Activated CD8-positive, alpha-beta T cell treated with anti-CD3 and anti-CD28 coated beads, Interleukin-2, amount 10 ng/mL, durations not matched to agents 7 days and 5 days (primary cell): ENCODE measurements at regions of chr11 and their contacts with region 1.

Region 1: DNA sequence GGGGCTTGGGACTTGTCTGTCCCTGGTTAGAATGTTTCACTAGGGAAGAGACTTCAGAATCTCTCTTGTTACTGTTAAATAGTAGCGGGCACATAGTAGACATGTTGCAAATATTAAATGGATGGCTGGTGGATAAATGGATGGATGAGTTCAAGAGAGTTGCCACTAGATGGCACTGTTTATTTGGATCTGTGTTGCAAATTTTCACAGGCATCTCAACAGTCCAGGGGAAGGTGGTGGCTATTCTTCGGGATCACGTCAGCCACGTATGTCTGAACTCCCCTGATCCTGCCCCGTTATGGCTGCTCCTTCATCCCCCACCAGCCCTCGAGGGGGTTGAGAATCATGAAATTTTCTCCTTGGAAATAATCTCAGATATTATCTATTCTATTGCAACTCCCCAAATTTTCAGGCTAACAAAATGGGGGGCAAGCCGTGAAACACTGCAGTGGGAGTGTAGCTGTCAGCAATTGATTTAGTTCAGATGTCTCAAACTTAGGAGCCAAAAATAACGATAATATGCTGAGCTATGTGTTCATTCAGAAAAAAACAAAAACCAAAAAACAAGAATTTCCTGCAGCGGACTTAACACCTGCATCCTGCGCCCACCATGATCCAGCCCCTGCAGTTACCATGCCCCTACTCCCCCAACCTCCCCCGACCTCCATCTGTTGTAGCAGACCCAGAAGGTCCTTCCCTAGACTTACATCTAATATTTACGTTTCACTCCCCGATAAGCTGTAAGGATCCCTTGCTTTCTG is 29.1 kb upstream of the BIRC3 start:
- DNase-seq: peak; percentile 58
- ATAC-seq: peak; percentile 92
- H3K4me3 Mint-ChIP-seq: peak overlapping the region; percentile 31
- H3K27ac Mint-ChIP-seq: no peak overlapping the region
- H3K4me1 Mint-ChIP-seq: peaks cover 22% of the 10 kb centered on the region
- H3K27me3 Mint-ChIP-seq: no peaks in the 10 kb centered on the region

Region 2: GRCh38 chr11:102204174-102204573 is 84.0 kb before region 1 on chr11:
- CTCF ChIA-PET with region 1: no interaction called
- POLR2A ChIA-PET with region 1: no interaction called
- DNase-seq: no peak
- ATAC-seq: no peak
- H3K4me3 Mint-ChIP-seq: no peak overlapping the region
- H3K27ac Mint-ChIP-seq: no peak overlapping the region
- H3K4me1 Mint-ChIP-seq: no peaks in the 10 kb centered on the region
- H3K27me3 Mint-ChIP-seq: peaks cover 2% of the 10 kb centered on the region

Region 3: DNA sequence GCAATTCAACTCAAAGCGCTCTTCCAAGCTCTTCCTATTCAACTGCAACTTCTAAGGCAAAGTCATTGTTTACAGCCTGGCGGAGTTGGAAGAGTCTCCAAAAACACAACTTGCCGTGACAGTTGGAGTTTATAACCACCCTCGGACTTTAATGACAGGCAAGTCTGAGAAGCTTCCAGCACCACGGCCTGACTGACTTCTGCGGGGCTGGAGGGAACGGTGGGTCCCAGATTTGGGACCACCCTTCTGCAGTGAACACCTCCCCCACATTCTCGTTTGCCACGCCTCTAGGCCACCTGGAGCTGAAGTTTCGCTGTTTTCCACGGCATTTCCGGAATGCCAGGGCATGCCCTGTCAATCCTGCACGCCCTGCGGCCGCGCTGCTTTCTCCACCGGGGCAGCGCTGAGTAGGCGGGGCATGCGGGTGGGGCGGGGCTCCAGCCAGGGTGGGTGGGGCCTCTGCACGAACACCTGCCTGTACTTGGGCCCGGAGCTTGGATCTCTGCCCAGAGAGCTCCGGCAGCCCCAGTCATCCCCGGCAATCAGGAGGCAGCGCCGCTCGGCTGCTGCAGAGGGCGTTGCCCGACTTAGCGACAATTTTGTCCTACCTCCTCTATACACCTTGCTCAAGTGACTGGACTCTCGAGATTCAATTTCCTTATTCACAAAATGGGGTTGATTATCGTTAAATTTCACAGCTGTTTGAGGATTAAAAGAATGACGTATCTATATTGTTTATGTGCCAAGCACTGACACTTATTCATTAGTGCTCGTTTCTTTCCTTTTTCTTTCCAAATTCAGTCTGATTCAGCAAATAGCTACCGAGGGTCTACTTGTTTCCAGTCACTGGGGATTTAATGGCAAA is 19.6 kb before region 1 on chr11:
- CTCF ChIA-PET with region 1: interaction called, 11 read pairs
- POLR2A ChIA-PET with region 1: no interaction called
- DNase-seq: peak; percentile 76
- ATAC-seq: peak; percentile 99
- H3K4me3 Mint-ChIP-seq: peak overlapping the region; percentile 65
- H3K27ac Mint-ChIP-seq: no peak overlapping the region
- H3K4me1 Mint-ChIP-seq: peaks cover 19% of the 10 kb centered on the region
- H3K27me3 Mint-ChIP-seq: peaks cover 42% of the 10 kb centered on the region

Region 4: DNA sequence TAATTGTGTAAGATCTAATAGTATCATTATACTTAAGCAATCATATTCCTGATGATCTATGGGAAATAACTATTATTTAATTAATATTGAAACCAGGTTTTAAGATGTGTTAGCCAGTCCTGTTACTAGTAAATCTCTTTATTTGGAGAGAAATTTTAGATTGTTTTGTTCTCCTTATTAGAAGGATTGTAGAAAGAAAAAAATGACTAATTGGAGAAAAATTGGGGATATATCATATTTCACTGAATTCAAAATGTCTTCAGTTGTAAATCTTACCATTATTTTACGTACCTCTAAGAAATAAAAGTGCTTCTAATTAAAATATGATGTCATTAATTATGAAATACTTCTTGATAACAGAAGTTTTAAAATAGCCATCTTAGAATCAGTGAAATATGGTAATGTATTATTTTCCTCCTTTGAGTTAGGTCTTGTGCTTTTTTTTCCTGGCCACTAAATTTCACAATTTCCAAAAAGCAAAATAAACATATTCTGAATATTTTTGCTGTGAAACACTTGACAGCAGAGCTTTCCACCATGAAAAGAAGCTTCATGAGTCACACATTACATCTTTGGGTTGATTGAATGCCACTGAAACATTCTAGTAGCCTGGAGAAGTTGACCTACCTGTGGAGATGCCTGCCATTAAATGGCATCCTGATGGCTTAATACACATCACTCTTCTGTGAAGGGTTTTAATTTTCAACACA is 35.6 kb after region 1 on chr11:
- CTCF ChIA-PET with region 1: interaction called, 484 read pairs
- POLR2A ChIA-PET with region 1: interaction called, 23 read pairs
- DNase-seq: no peak
- ATAC-seq: no peak
- H3K4me3 Mint-ChIP-seq: no peak overlapping the region
- H3K27ac Mint-ChIP-seq: no peak overlapping the region
- H3K4me1 Mint-ChIP-seq: peaks cover 56% of the 10 kb centered on the region
- H3K27me3 Mint-ChIP-seq: no peaks in the 10 kb centered on the region

Region 5: DNA sequence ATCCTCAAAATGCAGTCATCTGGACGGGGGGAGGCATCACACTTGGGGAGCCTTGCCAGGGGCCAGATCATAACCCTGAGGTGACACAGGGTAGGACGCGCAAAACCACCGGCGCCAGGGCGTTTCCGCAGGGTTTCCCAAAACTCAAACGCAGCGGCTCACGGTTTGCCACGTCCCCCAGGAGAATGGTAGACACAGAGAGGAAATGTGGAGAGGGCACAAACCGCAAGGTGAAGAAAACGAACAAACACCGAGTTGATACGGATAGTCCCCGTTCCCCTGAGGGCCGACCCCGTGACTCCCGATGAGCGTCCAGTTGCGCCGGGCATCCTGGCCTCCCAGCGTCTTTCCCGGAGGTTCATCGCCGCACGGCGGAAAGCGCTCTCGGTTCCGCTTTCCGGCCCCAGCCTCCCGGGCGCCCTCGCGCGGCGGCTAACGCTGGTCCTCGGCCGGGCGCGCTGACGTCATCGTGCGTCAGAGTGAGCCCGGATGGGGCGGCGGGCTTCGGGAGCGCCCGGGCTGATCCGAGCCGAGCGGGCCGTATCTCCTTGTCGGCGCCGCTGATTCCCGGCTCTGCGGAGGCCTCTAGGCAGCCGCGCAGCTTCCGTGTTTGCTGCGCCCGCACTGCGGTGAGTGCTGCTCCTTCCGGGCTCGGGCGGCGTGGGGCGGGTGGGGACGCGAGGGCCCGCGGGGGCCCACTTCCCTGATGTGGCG is 58.8 kb after region 1 on chr11 and contains the start of gene BIRC2:
- CTCF ChIA-PET with region 1: interaction called, 157 read pairs
- POLR2A ChIA-PET with region 1: no interaction called
- DNase-seq: peak; percentile 95
- ATAC-seq: peak; percentile 95
- H3K4me3 Mint-ChIP-seq: peak within 1 kb of the TSS; percentile 97
- H3K27ac Mint-ChIP-seq: peak within 1 kb of the TSS; percentile 98
- H3K4me1 Mint-ChIP-seq: peaks cover 35% of the 10 kb centered on the region
- H3K27me3 Mint-ChIP-seq: no peaks in the 10 kb centered on the region
- total RNA-seq, gene BIRC2: 28.3 to 30.4 TPM

Region 6: DNA sequence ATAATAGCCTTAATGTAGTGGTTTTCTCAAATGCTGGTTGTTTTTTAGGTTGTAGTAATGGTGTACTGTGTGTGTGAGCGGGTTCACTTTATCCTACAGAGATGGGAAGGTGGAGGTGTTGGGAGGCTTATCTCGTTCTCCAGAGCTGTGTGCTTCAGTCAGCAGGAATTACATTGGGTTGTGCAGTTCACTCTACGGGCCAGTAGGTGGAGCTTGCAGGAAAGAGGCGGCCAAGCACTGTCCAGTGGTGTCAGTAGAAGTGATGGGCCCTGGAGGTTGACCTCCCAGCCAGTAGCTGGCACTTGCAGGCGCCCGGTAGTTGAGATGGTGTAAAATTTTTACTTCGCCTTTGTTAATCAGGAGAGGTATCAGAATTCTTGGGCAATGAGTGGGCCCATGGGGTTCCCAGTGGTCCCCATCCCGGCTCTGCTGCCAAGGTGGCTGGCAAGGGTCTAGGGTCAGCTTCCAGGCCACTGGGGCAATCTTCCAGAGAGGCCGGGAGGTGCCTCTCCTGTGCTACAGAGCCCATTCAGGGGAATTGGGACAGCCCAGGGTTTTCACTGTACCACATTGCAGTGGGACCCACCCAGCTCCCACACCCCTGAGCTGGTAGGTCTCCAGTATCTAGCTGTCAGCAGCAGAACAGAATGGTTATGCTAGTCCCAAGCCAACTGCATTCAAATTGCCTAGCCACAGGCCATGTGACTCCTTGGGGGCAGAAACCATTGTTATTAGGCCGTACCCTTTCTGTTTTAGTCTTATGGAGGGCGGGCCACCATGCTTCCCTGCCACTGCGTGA is 102.7 kb after region 1 on chr11:
- CTCF ChIA-PET with region 1: interaction called, 26 read pairs
- POLR2A ChIA-PET with region 1: interaction called, 3 read pairs
- DNase-seq: peak; percentile 64
- ATAC-seq: peak; percentile 70
- H3K4me3 Mint-ChIP-seq: no peak overlapping the region
- H3K27ac Mint-ChIP-seq: no peak overlapping the region
- H3K4me1 Mint-ChIP-seq: peaks cover 26% of the 10 kb centered on the region
- H3K27me3 Mint-ChIP-seq: no peaks in the 10 kb centered on the region

Region 7: DNA sequence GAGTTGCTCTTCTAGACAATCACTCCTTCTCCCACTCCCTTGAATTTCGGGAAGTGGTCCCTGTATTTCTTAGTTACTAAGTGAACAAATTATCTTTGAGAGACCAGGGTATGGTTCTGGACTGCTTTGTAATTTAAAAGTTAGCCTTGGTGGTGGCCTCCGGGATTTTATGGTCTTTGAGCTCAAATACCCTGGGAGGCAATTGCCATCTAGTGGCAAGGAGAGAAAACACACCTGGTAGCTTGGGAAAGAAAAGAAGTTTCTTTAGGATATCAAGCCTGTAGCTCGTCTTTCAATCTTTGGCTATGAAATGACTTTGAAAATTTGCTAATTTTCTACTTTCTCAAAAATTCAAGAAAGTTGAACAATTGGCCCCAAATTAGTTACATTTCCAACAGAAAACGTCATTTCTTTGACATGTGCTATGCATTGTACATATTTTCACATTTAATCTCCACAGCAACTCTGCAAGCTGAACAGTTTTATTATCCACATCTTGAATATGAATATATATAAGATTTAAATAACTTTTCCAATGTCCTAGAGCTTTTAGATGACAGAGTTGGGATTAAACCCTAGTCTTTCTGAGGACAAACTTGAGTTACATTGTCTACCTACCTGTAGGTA is 378.3 kb after region 1 on chr11:
- CTCF ChIA-PET with region 1: interaction called, 25 read pairs
- POLR2A ChIA-PET with region 1: interaction called, 3 read pairs
- DNase-seq: peak; percentile 38
- ATAC-seq: peak; percentile 36
- H3K4me3 Mint-ChIP-seq: no peak overlapping the region
- H3K27ac Mint-ChIP-seq: no peak overlapping the region
- H3K4me1 Mint-ChIP-seq: no peaks in the 10 kb centered on the region
- H3K27me3 Mint-ChIP-seq: peaks cover 19% of the 10 kb centered on the region